B cell (primary cell): ENCODE measurements at regions of chr6 and their contacts with region 1.

Region 1: GRCh38 chr6:85354761-85355618 is 94.9 kb upstream of the NT5E start:
- DNase-seq: peak; percentile 56
- ATAC-seq: peak; percentile 73
- H3K4me3 ChIP-seq: no peak overlapping the region
- H3K4me3 Mint-ChIP-seq: no peak overlapping the region
- H3K27ac ChIP-seq: no peak overlapping the region
- H3K27ac Mint-ChIP-seq: no peak overlapping the region
- H3K4me1 ChIP-seq: no peaks in the 10 kb centered on the region
- H3K4me1 Mint-ChIP-seq: no peaks in the 10 kb centered on the region
- H3K27me3 ChIP-seq: no peaks in the 10 kb centered on the region
- H3K27me3 Mint-ChIP-seq: peaks cover 4% of the 10 kb centered on the region
- CTCF ChIP-seq: peak; percentile 98

Region 2: GRCh38 chr6:85490431-85491253 is 135.7 kb after region 1 on chr6:
- CTCF ChIA-PET with region 1: interaction called, 224 read pairs
- POLR2A ChIA-PET with region 1: no interaction called
- intact Hi-C with region 1: no loop called
- DNase-seq: no peak
- ATAC-seq: no peak
- H3K4me3 ChIP-seq: no peak overlapping the region
- H3K4me3 Mint-ChIP-seq: no peak overlapping the region
- H3K27ac ChIP-seq: no peak overlapping the region
- H3K27ac Mint-ChIP-seq: no peak overlapping the region
- H3K4me1 ChIP-seq: no peaks in the 10 kb centered on the region
- H3K4me1 Mint-ChIP-seq: no peaks in the 10 kb centered on the region
- H3K27me3 ChIP-seq: no peaks in the 10 kb centered on the region
- H3K27me3 Mint-ChIP-seq: no peaks in the 10 kb centered on the region
- CTCF ChIP-seq: no peak

Region 3: DNA sequence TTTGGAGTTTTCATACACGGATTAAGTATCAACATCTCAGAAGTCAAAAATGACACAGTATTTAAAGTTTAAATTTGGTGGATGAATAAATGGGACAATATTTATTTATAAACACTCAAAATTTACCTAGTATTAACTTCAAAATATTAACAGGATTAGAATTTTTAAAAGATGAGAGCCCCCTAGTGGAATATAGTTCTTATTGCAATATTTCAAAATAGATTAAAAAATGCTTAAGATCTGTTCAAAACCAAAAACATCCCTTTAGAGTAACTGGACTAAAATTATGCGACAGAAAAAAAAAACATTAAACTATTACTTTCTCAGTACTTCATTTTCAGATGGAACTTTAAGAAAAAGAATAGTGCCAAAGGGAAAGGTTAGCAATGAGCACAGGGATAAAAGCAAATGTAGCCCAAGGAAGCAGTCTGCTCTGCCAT is 182.1 kb after region 1 on chr6:
- CTCF ChIA-PET with region 1: interaction called, 29 read pairs
- POLR2A ChIA-PET with region 1: no interaction called
- intact Hi-C with region 1: loop called (anchors 1 kb)
- DNase-seq: peak; percentile 14
- ATAC-seq: no peak
- H3K4me3 ChIP-seq: no peak overlapping the region
- H3K4me3 Mint-ChIP-seq: no peak overlapping the region
- H3K27ac ChIP-seq: no peak overlapping the region
- H3K27ac Mint-ChIP-seq: no peak overlapping the region
- H3K4me1 ChIP-seq: no peaks in the 10 kb centered on the region
- H3K4me1 Mint-ChIP-seq: no peaks in the 10 kb centered on the region
- H3K27me3 ChIP-seq: no peaks in the 10 kb centered on the region
- H3K27me3 Mint-ChIP-seq: no peaks in the 10 kb centered on the region
- CTCF ChIP-seq: peak; percentile 92

Region 4: DNA sequence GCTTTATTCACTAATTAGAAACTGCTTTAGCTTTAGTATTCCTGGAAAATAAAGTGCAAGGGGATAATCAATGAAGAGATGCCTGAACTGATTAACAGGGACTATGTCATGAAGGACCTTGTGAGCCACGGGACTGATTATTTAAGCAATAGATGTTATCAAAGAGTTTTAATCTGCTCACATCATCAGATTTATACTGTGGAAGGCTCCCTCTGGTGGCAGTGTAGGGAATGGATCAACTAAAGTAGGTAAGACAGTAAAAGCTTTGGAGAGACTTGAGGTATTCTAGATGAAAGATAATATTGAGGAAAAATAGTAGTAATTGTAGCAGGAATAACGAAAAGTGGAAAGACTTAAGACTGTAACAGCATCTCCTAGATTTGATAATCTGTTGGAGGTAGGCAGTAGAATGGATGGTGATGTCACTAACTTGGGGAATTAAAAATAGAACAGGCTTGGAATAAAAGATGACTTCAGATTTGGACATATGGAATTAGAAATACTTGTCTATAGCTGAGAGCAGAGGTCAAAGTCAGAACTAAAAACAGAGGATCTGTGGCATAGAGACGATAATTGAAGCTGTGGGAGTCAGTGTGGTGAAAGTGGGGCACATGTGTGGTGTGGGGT is 1502.1 kb after region 1 on chr6:
- CTCF ChIA-PET with region 1: interaction called, 4 read pairs
- POLR2A ChIA-PET with region 1: no interaction called
- intact Hi-C with region 1: loop called (anchors 10 kb)
- DNase-seq: peak; percentile 25
- ATAC-seq: no peak
- H3K4me3 ChIP-seq: no peak overlapping the region
- H3K4me3 Mint-ChIP-seq: no peak overlapping the region
- H3K27ac ChIP-seq: no peak overlapping the region
- H3K27ac Mint-ChIP-seq: no peak overlapping the region
- H3K4me1 ChIP-seq: no peaks in the 10 kb centered on the region
- H3K4me1 Mint-ChIP-seq: no peaks in the 10 kb centered on the region
- H3K27me3 ChIP-seq: peaks cover 0 to 7% (median 2%) of the 10 kb centered on the region in 4 experiments
- H3K27me3 Mint-ChIP-seq: peaks cover 7% of the 10 kb centered on the region
- CTCF ChIP-seq: peak; percentile 84